Naive thymus-derived CD4-positive, alpha-beta T cell (primary cell): ENCODE measurements at regions of chr1 and their contacts with region 1.

Region 1: GRCh38 chr1:232950197-232951176 is at the start of gene NTPCR:
- DNase-seq: peak; percentile 84 to 99 (median 93)
- ATAC-seq: peak; percentile 88
- H3K4me3 ChIP-seq: peak within 1 kb of the TSS; percentile 76
- H3K4me3 Mint-ChIP-seq: peak within 1 kb of the TSS; percentile 90 to 98 (median 96)
- H3K27ac ChIP-seq: peak within 1 kb of the TSS; percentile 80
- H3K27ac Mint-ChIP-seq: peak within 1 kb of the TSS; percentile 90 to 97 (median 92)
- H3K4me1 ChIP-seq: peaks cover 8 to 18% of the 10 kb centered on the region in 2 donors
- H3K4me1 Mint-ChIP-seq: peaks cover 23 to 43% (median 42%) of the 10 kb centered on the region in 7 donors
- H3K27me3 ChIP-seq: no peaks in the 10 kb centered on the region
- H3K27me3 Mint-ChIP-seq: no peaks in the 10 kb centered on the region
- total RNA-seq, gene NTPCR: 16.0 to 28.7 (median 17.3) TPM

Region 2: DNA sequence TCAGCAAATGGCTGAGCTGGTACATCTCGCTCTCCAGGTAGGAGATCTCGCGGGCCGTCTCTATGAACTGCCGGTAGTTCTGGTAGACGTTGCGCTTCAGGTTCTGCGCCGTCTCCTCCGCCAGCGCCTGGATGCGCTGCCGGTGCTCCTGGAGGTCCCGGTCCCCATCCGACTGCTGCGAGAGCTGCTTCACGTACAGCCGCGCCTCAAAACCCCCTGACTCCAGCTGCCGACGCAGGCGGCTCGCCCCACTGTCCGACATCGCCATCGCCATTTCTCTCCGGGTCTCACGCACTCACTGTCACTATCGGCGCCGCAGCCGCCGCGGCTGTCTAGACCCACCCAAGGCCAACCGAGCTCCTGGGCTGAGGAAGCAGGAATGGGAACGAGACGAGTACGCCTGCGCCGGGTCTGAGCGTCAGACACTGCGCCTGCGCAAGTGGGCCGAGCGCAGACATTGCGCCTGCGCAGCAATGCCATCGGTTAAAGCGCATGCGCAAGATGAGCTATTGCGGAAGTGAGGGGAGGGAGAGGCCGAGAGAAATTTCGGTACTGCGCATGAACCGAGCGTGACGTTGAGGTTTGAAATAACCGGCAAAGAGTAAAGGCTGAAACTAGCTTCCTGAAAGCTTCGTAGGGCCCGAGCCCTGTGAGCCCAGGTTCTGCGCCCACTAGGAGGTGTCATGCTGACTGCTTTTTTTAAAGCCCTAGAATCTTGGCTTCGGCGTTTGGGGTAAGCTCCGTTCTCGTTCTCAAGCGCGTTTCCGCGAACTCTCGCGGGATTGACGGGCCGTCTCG is 1612.8 kb before region 1 on chr1 and contains the start of gene EXOC8:
- CTCF ChIA-PET with region 1: no interaction called
- POLR2A ChIA-PET with region 1: no interaction called
- intact Hi-C with region 1: loop called in 1 of 2 experiments (anchors 5 kb)
- DNase-seq: peak; percentile 95 to 100 (median 98)
- ATAC-seq: peak; percentile 86
- H3K4me3 ChIP-seq: peak within 1 kb of the TSS; percentile 99
- H3K4me3 Mint-ChIP-seq: peak within 1 kb of the TSS; percentile 97 to 100 (median 99)
- H3K27ac ChIP-seq: peak within 1 kb of the TSS; percentile 94
- H3K27ac Mint-ChIP-seq: peak within 1 kb of the TSS; percentile 96 to 100 (median 100)
- H3K4me1 ChIP-seq: peaks cover 41 to 51% of the 10 kb centered on the region in 2 donors
- H3K4me1 Mint-ChIP-seq: peaks cover 36 to 83% (median 67%) of the 10 kb centered on the region in 7 donors
- H3K27me3 ChIP-seq: no peaks in the 10 kb centered on the region
- H3K27me3 Mint-ChIP-seq: peaks cover 0 to 6% (median 0%) of the 10 kb centered on the region in 5 donors
- total RNA-seq, gene EXOC8: 21.9 to 33.8 (median 28.0) TPM

Region 3: DNA sequence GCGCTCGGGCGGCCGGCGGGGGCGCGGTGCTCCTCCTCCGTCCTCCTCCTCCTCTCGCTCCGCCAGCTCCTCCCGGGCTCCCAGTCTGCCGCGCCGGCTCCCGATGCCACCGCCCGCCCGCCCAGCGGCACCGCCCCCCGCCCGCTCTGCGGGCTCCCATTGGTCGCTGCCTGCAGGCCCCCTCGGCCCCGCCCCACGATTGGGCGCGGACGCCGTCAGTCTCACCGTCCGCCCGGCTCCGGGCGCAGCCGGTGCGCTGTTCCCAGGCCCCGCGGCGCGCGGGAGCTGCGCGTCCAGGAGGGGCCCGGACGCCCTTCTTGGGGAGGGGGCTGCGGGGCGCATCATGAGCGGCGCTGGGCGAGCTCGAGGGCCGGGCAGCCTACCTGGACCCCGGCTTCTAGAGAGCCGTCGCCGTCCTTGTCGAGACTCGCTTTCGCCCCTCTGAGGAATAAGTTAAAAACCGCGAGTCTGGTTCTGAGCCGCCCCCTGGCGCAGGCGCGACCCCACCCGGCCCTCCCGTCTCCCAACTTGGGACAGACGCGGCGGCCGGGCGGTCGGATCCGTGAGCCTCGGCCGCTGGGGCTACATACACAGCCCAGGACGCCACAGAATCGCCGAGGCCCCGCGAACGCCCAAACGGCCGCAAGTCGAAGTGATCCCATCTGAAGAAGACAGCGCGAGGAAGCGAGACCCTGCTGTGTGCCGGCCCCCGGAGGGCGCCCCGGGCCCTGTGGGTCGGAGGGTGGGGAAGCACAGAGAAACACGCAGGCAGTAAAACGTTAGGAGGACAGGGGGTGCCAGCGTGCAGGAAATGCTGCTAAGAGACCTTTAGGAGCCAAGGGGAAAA is 320.2 kb before region 1 on chr1 and contains the start of gene SIPA1L2:
- CTCF ChIA-PET with region 1: no interaction called
- POLR2A ChIA-PET with region 1: no interaction called
- intact Hi-C with region 1: loop called (anchors 1 kb)
- DNase-seq: peak; percentile 66 to 95 (median 84)
- ATAC-seq: peak; percentile 96
- H3K4me3 ChIP-seq: peak within 1 kb of the TSS; percentile 58
- H3K4me3 Mint-ChIP-seq: peak within 1 kb of the TSS; percentile 82 to 91 (median 86)
- H3K27ac ChIP-seq: no peak within 1 kb of the TSS
- H3K27ac Mint-ChIP-seq: peak within 1 kb of the TSS in 2 of 9 donors; percentile 14 to 64
- H3K4me1 ChIP-seq: peaks cover 4 to 8% of the 10 kb centered on the region in 2 donors
- H3K4me1 Mint-ChIP-seq: peaks cover 14 to 30% (median 27%) of the 10 kb centered on the region in 7 donors
- H3K27me3 ChIP-seq: peaks cover 0 to 3% of the 10 kb centered on the region in 2 donors
- H3K27me3 Mint-ChIP-seq: peaks cover 11 to 59% (median 29%) of the 10 kb centered on the region in 5 donors
- total RNA-seq, gene SIPA1L2: 0.27 to 4.9 (median 0.69) TPM

Region 4: GRCh38 chr1:232722626-232723025 is 227.9 kb before region 1 on chr1:
- CTCF ChIA-PET with region 1: no interaction called
- POLR2A ChIA-PET with region 1: no interaction called
- intact Hi-C with region 1: loop called in 1 of 2 experiments (anchors 5 kb)
- DNase-seq: no peak
- ATAC-seq: no peak
- H3K4me3 ChIP-seq: no peak overlapping the region
- H3K4me3 Mint-ChIP-seq: no peak overlapping the region
- H3K27ac ChIP-seq: no peak overlapping the region
- H3K27ac Mint-ChIP-seq: no peak overlapping the region
- H3K4me1 ChIP-seq: no peaks in the 10 kb centered on the region
- H3K4me1 Mint-ChIP-seq: peaks cover 5 to 12% (median 10%) of the 10 kb centered on the region in 7 donors
- H3K27me3 ChIP-seq: no peaks in the 10 kb centered on the region
- H3K27me3 Mint-ChIP-seq: peaks cover 5 to 12% (median 10%) of the 10 kb centered on the region in 5 donors

Region 5: GRCh38 chr1:232880354-232880753 is 70.1 kb before region 1 on chr1:
- CTCF ChIA-PET with region 1: no interaction called
- POLR2A ChIA-PET with region 1: no interaction called
- intact Hi-C with region 1: loop called in 1 of 2 experiments (anchors 2 kb)
- DNase-seq: no peak
- ATAC-seq: no peak
- H3K4me3 ChIP-seq: no peak overlapping the region
- H3K4me3 Mint-ChIP-seq: no peak overlapping the region
- H3K27ac ChIP-seq: no peak overlapping the region
- H3K27ac Mint-ChIP-seq: no peak overlapping the region
- H3K4me1 ChIP-seq: no peaks in the 10 kb centered on the region
- H3K4me1 Mint-ChIP-seq: peaks cover 0 to 8% (median 0%) of the 10 kb centered on the region in 7 donors
- H3K27me3 ChIP-seq: no peaks in the 10 kb centered on the region
- H3K27me3 Mint-ChIP-seq: no peaks in the 10 kb centered on the region

Region 6: DNA sequence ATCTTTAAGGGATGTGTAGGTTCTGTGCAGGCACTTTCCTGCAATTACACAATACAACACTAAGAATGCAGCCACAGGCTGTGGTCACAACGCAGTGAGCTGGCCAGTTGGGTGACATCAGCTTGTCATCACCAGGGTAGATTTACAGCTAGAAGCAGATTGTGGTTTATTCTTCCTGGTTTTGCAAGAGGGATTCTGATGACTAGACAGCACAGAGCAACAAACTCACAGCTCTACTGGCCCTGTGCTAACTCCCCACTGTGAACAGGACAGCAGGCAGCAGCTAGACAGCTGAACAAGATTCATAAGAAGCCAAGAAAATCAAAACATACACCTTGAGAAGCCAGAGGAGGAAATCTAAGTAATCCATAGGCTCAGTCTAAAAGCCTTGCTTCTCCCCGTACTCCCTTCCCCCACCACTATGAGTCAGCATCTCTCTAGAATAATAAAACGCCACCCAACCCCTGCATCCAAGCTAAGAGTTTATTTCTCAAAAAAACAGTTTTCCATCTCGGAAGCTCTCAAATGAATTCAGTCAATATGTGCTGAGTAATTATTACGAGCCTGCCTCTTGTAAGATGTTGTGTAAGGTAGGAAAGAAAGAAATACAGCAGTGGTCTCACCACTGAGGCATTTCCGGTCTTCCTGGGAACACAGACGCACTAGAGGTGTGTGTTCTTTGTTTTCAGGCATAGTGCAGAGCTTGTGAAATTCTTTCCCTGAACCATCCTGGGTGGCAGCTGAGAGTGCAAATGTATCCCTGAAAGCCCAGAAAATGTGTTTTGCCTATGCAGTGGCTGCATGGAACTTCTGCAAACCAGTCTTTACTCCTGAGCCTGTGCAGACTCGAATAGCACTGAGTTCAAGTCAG is 162.8 kb after region 1 on chr1:
- CTCF ChIA-PET with region 1: no interaction called
- POLR2A ChIA-PET with region 1: no interaction called
- intact Hi-C with region 1: loop called in 1 of 2 experiments (anchors 1 kb)
- DNase-seq: peak in 1 of 9 donors; percentile 37
- ATAC-seq: peak; percentile 91
- H3K4me3 ChIP-seq: no peak overlapping the region
- H3K4me3 Mint-ChIP-seq: peak overlapping the region in 1 of 10 donors; percentile 69
- H3K27ac ChIP-seq: no peak overlapping the region
- H3K27ac Mint-ChIP-seq: peak overlapping the region in 1 of 9 donors; percentile 85
- H3K4me1 ChIP-seq: no peaks in the 10 kb centered on the region
- H3K4me1 Mint-ChIP-seq: peaks cover 0 to 45% (median 14%) of the 10 kb centered on the region in 7 donors
- H3K27me3 ChIP-seq: no peaks in the 10 kb centered on the region
- H3K27me3 Mint-ChIP-seq: no peaks in the 10 kb centered on the region